CD8-positive, alpha-beta T cell (primary cell): ENCODE measurements at regions of chr16 and their contacts with region 1.

Region 1: GRCh38 chr16:4616047-4616811 is 1.5 kb upstream of the UBALD1 start:
- DNase-seq: peak; percentile 96 to 100 (median 98)
- ATAC-seq: peak; percentile 90
- H3K4me3 ChIP-seq: peak overlapping the region; percentile 67 to 97
- H3K4me3 Mint-ChIP-seq: peak overlapping the region; percentile 96
- H3K27ac ChIP-seq: peak overlapping the region; percentile 96 to 98
- H3K27ac Mint-ChIP-seq: peak overlapping the region; percentile 99
- H3K4me1 ChIP-seq: peaks cover 49% of the 10 kb centered on the region
- H3K4me1 Mint-ChIP-seq: peaks cover 41% of the 10 kb centered on the region
- H3K27me3 ChIP-seq: no peaks in the 10 kb centered on the region
- H3K27me3 Mint-ChIP-seq: no peaks in the 10 kb centered on the region
- CTCF ChIP-seq: no peak

Region 2: GRCh38 chr16:4253394-4254150 is 362.7 kb before region 1 on chr16:
- CTCF ChIA-PET with region 1: no interaction called
- POLR2A ChIA-PET with region 1: no interaction called
- intact Hi-C with region 1: loop called in 1 of 2 experiments (anchors 5 kb)
- DNase-seq: peak; percentile 98 to 100 (median 99)
- ATAC-seq: peak; percentile 96
- H3K4me3 ChIP-seq: peak overlapping the region; percentile 81 to 92
- H3K4me3 Mint-ChIP-seq: peak overlapping the region; percentile 93
- H3K27ac ChIP-seq: peak overlapping the region; percentile 88 to 89
- H3K27ac Mint-ChIP-seq: peak overlapping the region; percentile 98
- H3K4me1 ChIP-seq: peaks cover 6% of the 10 kb centered on the region
- H3K4me1 Mint-ChIP-seq: peaks cover 7% of the 10 kb centered on the region
- H3K27me3 ChIP-seq: no peaks in the 10 kb centered on the region
- H3K27me3 Mint-ChIP-seq: no peaks in the 10 kb centered on the region
- CTCF ChIP-seq: no peak

Region 3: DNA sequence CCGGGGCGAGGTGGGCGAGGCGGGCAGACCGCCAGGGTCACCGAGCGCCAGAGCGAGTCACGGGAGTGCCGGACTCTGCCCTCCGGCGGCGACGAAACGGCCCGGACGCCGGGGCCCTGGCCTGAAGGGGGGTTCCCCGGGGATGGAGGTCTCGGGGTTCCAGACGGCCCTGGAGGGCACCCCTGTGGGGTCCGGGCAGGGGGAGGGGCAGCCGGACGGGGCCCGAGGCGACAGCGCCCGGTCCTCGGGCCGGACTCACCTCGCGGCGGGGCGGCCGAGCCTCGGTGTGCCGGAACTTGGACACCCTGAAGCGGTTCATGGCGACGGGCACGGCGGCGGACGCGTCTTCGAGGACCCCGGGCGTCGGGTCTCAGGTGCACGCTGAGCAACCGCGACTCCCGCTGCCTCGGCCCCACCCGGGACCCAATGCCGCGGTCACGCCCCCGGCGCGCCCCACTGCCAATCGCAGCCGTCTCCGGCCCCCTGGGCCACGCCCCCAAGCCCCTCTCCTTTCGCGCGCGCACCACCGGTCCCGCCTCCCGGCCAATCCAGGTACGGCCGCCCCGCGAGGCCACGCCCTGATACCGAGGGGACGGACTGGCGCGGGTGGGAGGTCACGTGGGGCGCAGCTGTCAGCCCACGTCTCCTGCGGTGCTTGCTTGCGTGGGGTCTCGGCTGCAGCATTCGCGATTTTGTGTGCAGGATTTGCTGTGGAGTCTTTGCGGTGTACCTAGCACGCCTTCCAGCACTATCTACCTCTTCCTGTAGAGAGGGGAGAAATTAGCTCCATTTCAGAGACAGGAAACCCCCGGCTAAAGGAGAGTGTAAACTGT is 199.8 kb before region 1 on chr16 and contains the start of gene CORO7:
- CTCF ChIA-PET with region 1: no interaction called
- POLR2A ChIA-PET with region 1: interaction called, 6 read pairs
- intact Hi-C with region 1: loop called in 1 of 2 experiments (anchors 2 kb)
- DNase-seq: peak; percentile 98 to 100 (median 99)
- ATAC-seq: peak; percentile 78
- H3K4me3 ChIP-seq: peak within 1 kb of the TSS; percentile 51 to 60
- H3K4me3 Mint-ChIP-seq: peak within 1 kb of the TSS; percentile 97
- H3K27ac ChIP-seq: peak within 1 kb of the TSS; percentile 89 to 94
- H3K27ac Mint-ChIP-seq: peak within 1 kb of the TSS; percentile 99
- H3K4me1 ChIP-seq: peaks cover 44% of the 10 kb centered on the region
- H3K4me1 Mint-ChIP-seq: peaks cover 33% of the 10 kb centered on the region
- H3K27me3 ChIP-seq: no peaks in the 10 kb centered on the region
- H3K27me3 Mint-ChIP-seq: no peaks in the 10 kb centered on the region
- CTCF ChIP-seq: no peak
- total RNA-seq, gene CORO7: 950 to 991 TPM

Region 4: DNA sequence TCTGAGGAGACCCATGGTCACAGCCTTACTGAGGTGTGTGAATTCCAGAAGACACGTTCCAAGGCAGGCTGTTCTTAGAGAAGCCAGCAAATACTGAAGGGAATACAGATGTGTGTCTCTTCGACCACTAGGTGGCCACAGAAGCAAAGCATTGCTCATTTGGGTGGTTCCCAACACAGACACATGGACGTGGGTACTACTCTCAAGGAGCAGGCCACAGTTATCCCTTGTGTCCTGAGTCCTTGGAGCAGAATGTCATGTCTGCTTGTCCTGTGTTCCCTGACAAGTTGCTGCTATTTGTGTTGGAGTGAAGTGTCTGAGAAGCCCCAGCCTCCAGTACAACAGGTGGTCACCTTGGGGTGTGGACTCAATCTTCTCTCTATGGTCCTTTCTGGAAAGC is 109.8 kb before region 1 on chr16:
- CTCF ChIA-PET with region 1: interaction called, 6 read pairs
- POLR2A ChIA-PET with region 1: no interaction called
- intact Hi-C with region 1: loop called in 1 of 2 experiments (anchors 2 kb)
- DNase-seq: peak; percentile 28 to 88 (median 60)
- ATAC-seq: peak; percentile 34
- H3K4me3 ChIP-seq: no peak overlapping the region
- H3K4me3 Mint-ChIP-seq: peak overlapping the region; percentile 65
- H3K27ac ChIP-seq: peak overlapping the region; percentile 85 to 88
- H3K27ac Mint-ChIP-seq: peak overlapping the region; percentile 98
- H3K4me1 ChIP-seq: peaks cover 58% of the 10 kb centered on the region
- H3K4me1 Mint-ChIP-seq: peaks cover 59% of the 10 kb centered on the region
- H3K27me3 ChIP-seq: no peaks in the 10 kb centered on the region
- H3K27me3 Mint-ChIP-seq: no peaks in the 10 kb centered on the region
- CTCF ChIP-seq: peak; percentile 88

Region 5: DNA sequence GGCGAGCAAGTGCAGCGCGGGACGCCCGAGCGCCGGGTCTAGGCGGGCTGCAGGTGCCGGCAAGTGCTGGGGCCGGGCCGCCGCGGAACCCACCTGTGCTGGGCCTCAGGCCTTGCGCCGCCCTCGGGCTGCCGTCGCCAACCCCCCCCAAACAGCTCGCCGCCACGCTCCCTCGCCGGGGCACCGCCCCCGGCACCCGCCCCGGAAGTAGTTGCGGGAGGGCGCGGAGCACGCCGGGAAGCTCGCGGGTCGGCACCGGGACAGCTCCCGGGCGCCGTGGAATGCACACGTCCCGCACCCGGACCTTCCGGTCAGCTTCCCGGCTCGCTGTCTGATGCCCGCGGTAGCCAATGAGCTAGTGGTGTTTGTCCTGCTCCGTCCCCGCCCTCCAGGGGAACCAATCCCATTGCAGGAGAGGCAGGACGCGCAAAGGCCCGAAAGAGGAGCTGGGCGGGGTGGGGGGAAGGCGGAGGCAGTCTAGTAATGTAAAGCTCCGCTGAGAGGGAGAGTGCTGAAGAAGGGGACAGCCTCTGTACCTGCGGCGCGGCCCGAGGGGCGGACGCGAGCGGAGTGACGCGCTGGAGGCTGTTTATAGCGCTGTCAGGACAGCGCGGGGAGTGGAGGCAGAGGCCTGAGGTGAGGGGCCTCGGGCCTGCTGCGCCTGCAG is 118.0 kb after region 1 on chr16 and contains the starts of genes ANKS3 and DNAAF8:
- CTCF ChIA-PET with region 1: interaction called, 3 read pairs
- POLR2A ChIA-PET with region 1: interaction called, 15 read pairs
- intact Hi-C with region 1: loop called (anchors 1 kb)
- DNase-seq: peak; percentile 47 to 90 (median 79)
- ATAC-seq: peak; percentile 73
- H3K4me3 ChIP-seq: peak within 1 kb of the TSS; percentile 81 to 96
- H3K4me3 Mint-ChIP-seq: peak within 1 kb of the TSS; percentile 91
- H3K27ac ChIP-seq: peak within 1 kb of the TSS; percentile 69 to 75
- H3K27ac Mint-ChIP-seq: peak within 1 kb of the TSS; percentile 92
- H3K4me1 ChIP-seq: peaks cover 13% of the 10 kb centered on the region
- H3K4me1 Mint-ChIP-seq: peaks cover 17% of the 10 kb centered on the region
- H3K27me3 ChIP-seq: no peaks in the 10 kb centered on the region
- H3K27me3 Mint-ChIP-seq: no peaks in the 10 kb centered on the region
- CTCF ChIP-seq: no peak
- total RNA-seq, gene ANKS3: 8.6 to 11.8 TPM
- total RNA-seq, gene DNAAF8: not detected

Region 6: GRCh38 chr16:4846891-4847773 is 230.9 kb after region 1 on chr16 and contains the starts of genes GLYR1 and UBN1:
- CTCF ChIA-PET with region 1: no interaction called
- POLR2A ChIA-PET with region 1: no interaction called
- intact Hi-C with region 1: loop called in 1 of 2 experiments (anchors 1 kb)
- DNase-seq: peak; percentile 98 to 100 (median 100)
- ATAC-seq: peak; percentile 91
- H3K4me3 ChIP-seq: peak within 1 kb of the TSS; percentile 79 to 89
- H3K4me3 Mint-ChIP-seq: peak within 1 kb of the TSS; percentile 91
- H3K27ac ChIP-seq: peak within 1 kb of the TSS; percentile 92 to 95
- H3K27ac Mint-ChIP-seq: peak within 1 kb of the TSS; percentile 96
- H3K4me1 ChIP-seq: peaks cover 38% of the 10 kb centered on the region
- H3K4me1 Mint-ChIP-seq: peaks cover 60% of the 10 kb centered on the region
- H3K27me3 ChIP-seq: no peaks in the 10 kb centered on the region
- H3K27me3 Mint-ChIP-seq: no peaks in the 10 kb centered on the region
- CTCF ChIP-seq: no peak
- total RNA-seq, gene GLYR1: 71.8 to 76.7 TPM
- total RNA-seq, gene UBN1: 57.1 to 65.3 TPM